ENCODE measurements at regions of chr5 and their contacts with region 1.

Region 1: GRCh38 chr5:170747851-170748250 is 35.7 kb upstream of the GABRP start:
- DNase-seq: no peak
- H3K4me3 ChIP-seq: no peak overlapping the region
- H3K27ac ChIP-seq: no peak overlapping the region
- H3K27me3 ChIP-seq: peaks cover 0 to 50% (median 12%) of the 10 kb centered on the region in 45 donors
- CTCF ChIP-seq: peak in 36 of 56 donors; percentile 8 to 46 (median 27)

Region 2: GRCh38 chr5:169716278-169716677 is 1031.6 kb before region 1 on chr5:
- intact Hi-C with region 1: no loop called
- DNase-seq: no peak
- H3K4me3 ChIP-seq: no peak overlapping the region
- H3K27ac ChIP-seq: no peak overlapping the region
- H3K27me3 ChIP-seq: no peaks in the 10 kb centered on the region
- CTCF ChIP-seq: no peak

Region 3: DNA sequence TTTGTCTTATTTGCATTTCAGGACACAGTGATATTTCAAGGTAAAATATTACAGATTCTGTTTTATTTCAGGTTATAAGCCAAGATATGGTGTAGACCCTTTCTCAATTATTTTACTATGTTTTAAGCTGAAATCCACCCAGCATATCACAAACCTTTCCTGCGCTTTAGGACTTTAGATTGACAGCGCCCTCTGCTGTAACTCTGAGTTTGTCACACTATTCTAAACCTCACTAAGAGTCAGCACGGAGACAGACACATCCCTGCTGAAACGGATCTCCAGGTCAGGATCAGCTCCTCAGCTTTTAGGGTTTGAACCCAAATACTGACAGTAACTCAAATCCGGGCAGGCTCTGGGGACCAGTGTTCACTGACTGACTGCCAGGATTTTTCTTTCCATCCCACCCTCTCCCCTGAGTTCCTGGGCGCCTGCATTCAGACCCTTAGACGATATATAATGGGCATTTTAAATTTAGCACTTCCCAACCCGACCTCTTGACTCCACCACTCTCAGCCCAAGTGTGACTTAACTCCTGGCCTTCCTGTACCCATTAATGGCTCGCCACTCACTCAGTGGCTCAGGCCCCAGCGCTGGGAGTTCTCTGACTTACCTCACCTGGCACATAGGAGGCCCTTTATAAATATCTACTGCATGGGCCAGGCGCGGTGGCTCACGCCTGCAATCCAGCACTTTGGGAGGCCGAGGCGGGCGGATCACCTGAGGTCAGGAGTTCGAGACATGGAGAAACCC is 594.7 kb after region 1 on chr5:
- intact Hi-C with region 1: loop called (anchors 2 to 10 kb)
- DNase-seq: peak in 3 of 10 donors; percentile 13 to 63 (median 57)
- H3K4me3 ChIP-seq: no peak overlapping the region
- H3K27ac ChIP-seq: no peak overlapping the region
- H3K27me3 ChIP-seq: peaks cover 0 to 27% (median 2%) of the 10 kb centered on the region in 45 donors
- CTCF ChIP-seq: peak; percentile 31 to 76 (median 61)